Cardiac septum (tissue), 1 donor: ENCODE measurements at regions of chr7 and their contacts with region 1.

Region 1: DNA sequence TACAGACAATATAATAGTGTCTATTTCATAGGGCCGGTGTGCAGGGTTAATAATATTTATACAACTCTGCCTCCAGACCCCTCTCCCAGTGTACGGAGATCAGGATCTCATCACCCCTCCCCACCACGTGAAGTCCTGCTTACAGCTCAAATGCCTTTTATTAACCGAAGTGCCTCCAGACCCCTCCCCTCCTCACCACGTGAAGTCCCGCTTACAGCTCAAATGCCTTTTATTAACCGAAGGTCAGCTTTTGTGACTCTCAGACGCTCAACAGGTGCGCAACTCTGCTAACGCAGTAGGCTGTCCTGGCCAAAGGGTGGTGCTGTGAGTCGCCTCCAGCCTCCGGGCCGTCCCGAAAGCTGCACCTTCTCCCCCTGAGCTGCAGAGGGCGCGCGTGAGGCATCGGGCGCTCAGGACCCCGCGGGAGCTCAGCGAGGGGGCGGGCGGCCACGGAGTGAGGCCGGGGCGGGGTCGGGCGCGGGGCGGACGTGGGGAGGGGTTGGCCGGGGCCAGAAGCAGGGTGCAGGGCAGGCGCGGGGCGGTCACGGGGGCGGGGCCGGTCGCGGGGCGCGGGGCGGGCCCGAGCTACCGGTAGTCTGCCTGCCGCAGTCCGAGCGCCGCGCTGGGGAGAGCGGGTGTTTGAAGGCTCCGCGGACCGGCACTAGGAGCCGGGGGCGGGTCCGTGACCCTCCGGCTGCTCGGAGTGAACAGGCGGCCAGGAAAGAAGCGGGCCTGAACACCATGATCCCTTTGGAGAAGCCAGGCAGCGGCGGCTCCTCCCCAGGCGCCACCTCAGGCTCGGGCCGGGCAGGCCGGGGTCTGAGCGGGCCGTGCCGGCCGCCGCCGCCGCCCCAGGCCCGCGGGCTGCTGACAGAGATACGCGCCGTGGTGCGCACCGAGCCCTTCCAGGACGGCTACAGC is at the start of gene STK17A:
- DNase-seq: peak; percentile 98
- total RNA-seq, gene STK17A: 40.3 TPM

Region 2: DNA sequence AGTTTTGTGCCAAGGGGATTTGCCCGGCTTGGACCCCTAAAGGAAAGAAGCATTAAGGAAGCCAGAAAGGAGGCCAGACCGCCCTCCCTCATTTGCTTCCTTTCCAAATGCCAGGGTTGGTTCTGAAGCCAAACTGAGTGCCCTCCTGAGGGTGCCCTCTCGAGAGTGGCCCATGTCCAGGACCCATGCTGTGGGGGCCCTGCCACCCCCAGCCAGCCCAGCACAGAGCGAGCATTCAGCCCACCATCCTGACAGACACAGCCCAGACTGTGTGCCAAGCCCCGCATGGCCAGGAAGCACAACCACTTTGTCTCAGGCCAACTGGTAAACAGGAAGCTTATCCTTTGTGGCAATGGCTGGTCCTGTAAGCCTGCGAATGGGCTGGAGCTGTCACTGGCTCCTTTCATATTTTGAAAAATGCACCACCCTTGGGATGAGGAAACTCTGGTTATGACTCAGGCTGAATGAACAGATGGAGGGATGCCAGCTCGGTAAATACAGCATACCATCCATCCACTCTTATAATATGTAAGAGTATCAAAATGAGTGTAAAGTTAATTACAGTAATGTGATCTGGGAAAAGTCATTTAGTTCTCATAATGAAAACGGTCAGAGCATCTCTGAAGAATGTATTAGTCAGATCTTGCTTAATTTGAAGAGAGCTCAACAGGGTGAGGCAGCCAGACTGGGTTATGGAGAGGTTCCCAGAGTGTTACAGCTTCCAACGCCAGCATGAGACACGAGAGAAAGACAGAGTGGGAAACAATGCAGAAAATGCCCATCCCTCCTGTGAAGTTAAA is 65.1 kb after region 1 on chr7:
- intact Hi-C with region 1: loop called (anchors 2 kb)
- DNase-seq: peak; percentile 78

Region 3: GRCh38 chr7:43701929-43702328 is 119.2 kb after region 1 on chr7:
- intact Hi-C with region 1: loop called (anchors 1 kb)
- DNase-seq: no peak

Region 4: GRCh38 chr7:43838201-43838659 is 255.5 kb after region 1 on chr7:
- intact Hi-C with region 1: loop called (anchors 2 kb)
- DNase-seq: no peak